ENCODE measurements at regions of chr3 and their contacts with region 1.

Region 1: GRCh38 chr3:168285506-168285905 is 189.8 kb upstream of the GOLIM4 start:
- DNase-seq: no peak
- ATAC-seq: no peak
- H3K4me3 ChIP-seq: no peak overlapping the region
- H3K27ac ChIP-seq: no peak overlapping the region
- H3K4me1 ChIP-seq: no peaks in the 10 kb centered on the region
- H3K27me3 ChIP-seq: no peaks in the 10 kb centered on the region
- CTCF ChIP-seq: no peak
- POLR2A ChIP-seq: no peak
- RAD21 ChIP-seq: no peak

Region 2: DNA sequence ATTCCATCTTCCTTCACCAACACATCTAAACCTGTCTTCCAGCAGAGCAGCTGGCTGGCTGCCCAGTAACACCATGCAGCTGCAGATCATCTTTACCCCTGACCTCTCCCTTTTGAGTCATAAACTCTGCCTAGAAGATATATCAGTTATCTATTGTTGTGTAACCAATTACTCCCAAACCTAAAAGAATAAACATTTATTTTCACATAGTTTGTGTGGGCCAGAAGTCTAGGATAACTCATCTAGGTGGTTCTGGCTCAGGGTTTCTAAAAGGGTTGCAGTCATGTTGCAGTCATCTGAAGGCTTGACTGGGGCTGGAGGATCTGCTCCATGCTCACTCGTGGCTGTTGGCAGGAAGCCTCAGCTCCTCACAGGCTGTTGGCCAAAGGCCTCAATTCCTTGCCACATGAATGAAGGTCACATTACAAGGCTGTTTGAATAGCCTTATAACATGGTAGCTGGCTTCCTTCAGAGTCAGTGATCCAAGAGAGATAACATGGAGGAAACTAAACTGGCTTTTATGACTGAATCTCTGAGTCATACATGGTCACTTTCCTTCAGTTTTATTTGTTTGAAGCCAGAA is 282.6 kb before region 1 on chr3:
- CTCF ChIA-PET with region 1: no interaction called
- POLR2A ChIA-PET with region 1: no interaction called
- dilution Hi-C with region 1: no loop called
- in situ Hi-C with region 1: no loop called
- intact Hi-C with region 1: no loop called
- DNase-seq: peak; percentile 47
- ATAC-seq: no peak
- H3K4me3 ChIP-seq: no peak overlapping the region
- H3K27ac ChIP-seq: no peak overlapping the region
- H3K4me1 ChIP-seq: no peaks in the 10 kb centered on the region
- H3K27me3 ChIP-seq: no peaks in the 10 kb centered on the region; the same call in 1 of the 2 replicates
- CTCF ChIP-seq: no peak
- POLR2A ChIP-seq: no peak
- RAD21 ChIP-seq: no peak

Region 3: DNA sequence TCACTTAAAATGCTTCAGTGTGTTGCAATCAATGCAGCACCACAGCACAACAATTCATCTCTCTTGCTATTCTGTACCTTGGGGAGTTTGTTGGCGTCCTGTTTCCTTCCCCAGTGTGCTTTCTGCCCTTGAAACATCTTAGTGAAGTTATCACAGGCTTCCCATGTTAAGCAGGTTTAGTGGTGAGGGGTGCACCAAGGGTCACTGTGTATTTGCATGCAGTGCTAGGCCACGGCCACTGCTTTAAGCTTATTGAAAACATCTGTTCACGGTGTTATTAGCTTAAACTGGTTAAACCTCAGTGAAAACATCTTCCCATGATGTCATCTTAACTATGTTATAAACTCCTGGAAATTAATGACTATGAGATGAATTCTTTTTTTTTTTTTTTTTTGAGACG is 27.5 kb after region 1 on chr3:
- CTCF ChIA-PET with region 1: no interaction called
- POLR2A ChIA-PET with region 1: no interaction called
- dilution Hi-C with region 1: no loop called
- in situ Hi-C with region 1: no loop called
- intact Hi-C with region 1: loop called (anchors 1 kb)
- DNase-seq: peak; percentile 37
- ATAC-seq: no peak
- H3K4me3 ChIP-seq: no peak overlapping the region
- H3K27ac ChIP-seq: no peak overlapping the region
- H3K4me1 ChIP-seq: no peaks in the 10 kb centered on the region
- H3K27me3 ChIP-seq: no peaks in the 10 kb centered on the region
- CTCF ChIP-seq: no peak
- POLR2A ChIP-seq: no peak
- RAD21 ChIP-seq: no peak

Region 4: DNA sequence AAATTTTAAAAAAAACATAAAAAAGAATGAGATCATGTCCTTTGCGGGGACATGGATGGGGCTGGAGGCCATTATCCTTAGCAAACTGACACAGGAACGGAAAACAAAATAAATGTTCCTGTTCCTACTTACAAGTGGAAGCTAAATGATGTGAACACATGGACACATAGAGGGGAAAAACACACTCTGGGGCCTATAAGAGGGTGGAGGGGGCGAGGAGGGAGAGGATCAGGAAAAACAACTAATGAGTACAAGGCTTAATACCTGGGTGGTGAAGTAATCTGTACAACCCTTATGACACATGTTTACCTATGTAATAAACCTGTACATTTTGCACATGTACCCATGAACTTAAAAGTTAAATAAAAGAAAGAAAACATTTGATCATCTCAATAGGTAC is 105.7 kb after region 1 on chr3:
- CTCF ChIA-PET with region 1: no interaction called
- POLR2A ChIA-PET with region 1: no interaction called
- dilution Hi-C with region 1: no loop called
- in situ Hi-C with region 1: no loop called
- intact Hi-C with region 1: loop called (anchors 5 kb)
- DNase-seq: no peak
- ATAC-seq: no peak
- H3K4me3 ChIP-seq: no peak overlapping the region
- H3K27ac ChIP-seq: no peak overlapping the region
- H3K4me1 ChIP-seq: no peaks in the 10 kb centered on the region
- H3K27me3 ChIP-seq: no peaks in the 10 kb centered on the region; the same call in 1 of the 2 replicates
- CTCF ChIP-seq: no peak
- POLR2A ChIP-seq: no peak
- RAD21 ChIP-seq: no peak